ENCODE measurements at regions of chr14 and their contacts with region 1.

Region 1: GRCh38 chr14:69090187-69090789 is 62.6 kb downstream of the DCAF5 start:
- DNase-seq: no peak
- H3K4me3 Mint-ChIP-seq: no peak overlapping the region
- H3K27ac Mint-ChIP-seq: no peak overlapping the region
- H3K4me1 Mint-ChIP-seq: peaks cover 16% of the 10 kb centered on the region
- H3K27me3 Mint-ChIP-seq: no peaks in the 10 kb centered on the region

Region 2: DNA sequence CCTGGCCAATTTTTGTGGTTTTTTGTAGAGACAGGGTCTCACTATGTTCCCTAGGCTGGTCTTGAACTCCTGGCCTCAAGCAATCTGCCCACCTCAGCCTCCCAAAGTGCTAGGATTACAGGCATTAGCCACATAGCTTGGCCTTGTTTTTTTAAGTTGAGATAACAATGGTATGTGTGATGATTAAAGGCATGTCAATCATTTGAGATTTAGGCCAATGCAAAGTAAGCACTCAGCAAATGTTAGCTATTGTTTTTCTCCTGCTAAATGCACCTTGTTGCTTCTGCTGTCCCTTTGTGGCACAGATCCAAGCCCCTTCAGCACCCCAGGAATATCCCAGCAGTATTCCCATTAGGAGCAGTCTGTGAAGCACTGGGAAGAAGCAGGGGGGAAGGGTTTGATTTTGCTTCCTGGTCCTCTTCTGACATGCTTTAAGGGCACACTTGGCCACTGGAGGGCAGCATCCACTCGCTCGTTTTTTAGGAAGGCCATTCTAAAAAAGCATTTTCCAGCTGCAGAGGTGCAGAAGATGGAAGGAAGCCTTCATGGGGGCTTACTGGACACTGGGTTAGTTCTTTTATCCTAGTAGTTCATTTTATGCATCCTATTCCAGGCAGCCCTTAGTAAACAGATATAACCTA is 227.2 kb before region 1 on chr14:
- intact Hi-C with region 1: loop called (anchors 5 kb)
- DNase-seq: peak; percentile 53
- H3K4me3 Mint-ChIP-seq: no peak overlapping the region
- H3K27ac Mint-ChIP-seq: no peak overlapping the region
- H3K4me1 Mint-ChIP-seq: peaks cover 2% of the 10 kb centered on the region
- H3K27me3 Mint-ChIP-seq: no peaks in the 10 kb centered on the region

Region 3: DNA sequence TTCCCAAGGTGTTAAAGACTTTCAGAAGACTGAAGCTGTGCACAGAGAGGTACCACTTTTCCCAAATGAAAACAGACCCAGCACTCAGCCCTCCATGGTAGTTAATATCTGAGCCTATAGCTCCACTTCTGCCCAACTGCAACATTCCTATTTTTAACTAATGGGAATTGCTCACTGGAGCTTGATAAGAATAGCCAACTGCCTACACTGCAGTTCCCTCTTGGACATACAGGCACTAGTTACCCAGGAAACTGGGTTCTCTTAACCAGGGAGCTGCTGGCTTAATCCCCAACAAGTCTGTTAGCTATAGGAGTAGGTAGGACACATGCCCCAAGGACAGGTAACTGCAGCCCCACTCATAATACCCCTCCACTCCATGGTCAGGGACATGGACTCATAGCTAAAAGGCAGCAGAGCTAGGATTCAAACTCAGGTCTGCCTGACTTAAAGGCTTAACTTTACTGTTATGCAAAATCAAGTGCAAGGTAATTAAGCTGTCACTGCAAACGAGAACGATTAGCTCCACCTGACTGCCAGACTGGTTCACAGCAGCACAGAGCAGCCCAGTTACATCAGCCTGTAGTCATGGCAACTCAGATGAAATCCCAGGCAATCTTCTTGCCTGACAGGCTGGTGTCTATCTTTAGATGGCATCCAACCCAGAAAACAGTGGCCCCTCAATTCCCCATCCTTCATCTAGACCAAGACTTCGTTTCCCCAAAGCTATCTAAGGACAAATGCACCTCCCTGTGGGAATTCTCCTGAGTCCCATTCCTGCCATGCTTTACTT is 34.1 kb before region 1 on chr14:
- intact Hi-C with region 1: loop called (anchors 5 kb)
- DNase-seq: no peak
- H3K4me3 Mint-ChIP-seq: no peak overlapping the region
- H3K27ac Mint-ChIP-seq: no peak overlapping the region
- H3K4me1 Mint-ChIP-seq: peaks cover 11% of the 10 kb centered on the region
- H3K27me3 Mint-ChIP-seq: no peaks in the 10 kb centered on the region

Region 4: GRCh38 chr14:69226178-69226577 is 135.9 kb after region 1 on chr14:
- intact Hi-C with region 1: no loop called
- DNase-seq: no peak
- H3K4me3 Mint-ChIP-seq: no peak overlapping the region
- H3K27ac Mint-ChIP-seq: no peak overlapping the region
- H3K4me1 Mint-ChIP-seq: no peaks in the 10 kb centered on the region
- H3K27me3 Mint-ChIP-seq: no peaks in the 10 kb centered on the region